GM12878 (cell line): ENCODE measurements at regions of chr9 and their contacts with region 1.

Region 1: DNA sequence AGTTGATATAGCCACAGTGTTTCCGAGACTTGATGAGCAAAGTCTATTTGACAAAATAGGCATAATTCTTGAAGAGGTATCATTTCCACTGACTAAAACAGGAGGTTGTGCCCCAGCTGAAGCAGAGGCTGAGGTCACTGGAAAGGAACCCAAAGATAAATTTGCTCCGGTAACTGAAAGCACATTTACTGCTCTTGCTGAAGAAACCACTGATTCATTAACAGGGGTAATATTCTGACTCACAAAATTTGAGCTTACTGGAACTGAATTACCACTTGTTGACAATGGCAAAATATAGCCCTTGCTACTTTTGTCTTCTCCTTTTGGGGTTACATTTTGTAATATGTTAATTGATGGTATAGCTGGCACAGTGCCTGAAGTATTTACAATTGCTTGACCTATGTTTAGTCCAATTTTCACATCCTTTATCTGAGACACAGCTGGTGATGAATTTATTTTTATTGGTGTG is 30.2 kb downstream of the MLANA start:
- DNase-seq: peak; percentile 66
- ATAC-seq: peak; percentile 91
- H3K4me3 ChIP-seq: no peak overlapping the region
- H3K27ac ChIP-seq: no peak overlapping the region
- H3K4me1 ChIP-seq: no peaks in the 10 kb centered on the region; the same call in 1 of the 2 replicates
- H3K27me3 ChIP-seq: no peaks in the 10 kb centered on the region
- CTCF ChIP-seq: no peak
- EP300 ChIP-seq: peak; percentile 87 to 94; a peak in 3 of 4 replicates
- POLR2A ChIP-seq: no peak
- RAD21 ChIP-seq: no peak

Region 2: GRCh38 chr9:5851445-5851844 is 69.4 kb before region 1 on chr9:
- CTCF ChIA-PET with region 1: interaction called, 11 read pairs
- POLR2A ChIA-PET with region 1: interaction called, 8 read pairs
- RAD21 ChIA-PET with region 1: interaction called, 33 read pairs
- SMC1A ChIA-PET with region 1: interaction called, 40 read pairs
- in situ Hi-C with region 1: no loop called
- intact Hi-C with region 1: no loop called
- DNase-seq: peak; percentile 90
- ATAC-seq: peak; percentile 96
- H3K4me3 ChIP-seq: no peak overlapping the region
- H3K27ac ChIP-seq: peak overlapping the region; percentile 54; the same call in 1 of the 2 replicates
- H3K4me1 ChIP-seq: peaks cover 37% of the 10 kb centered on the region
- H3K27me3 ChIP-seq: no peaks in the 10 kb centered on the region
- CTCF ChIP-seq: peak in 1 of 3 experiments; percentile 11; a peak in 1 of 6 replicates
- EP300 ChIP-seq: peak; percentile 34 to 82; a peak in 2 of 4 replicates
- POLR2A ChIP-seq: no peak
- RAD21 ChIP-seq: no peak

Region 3: DNA sequence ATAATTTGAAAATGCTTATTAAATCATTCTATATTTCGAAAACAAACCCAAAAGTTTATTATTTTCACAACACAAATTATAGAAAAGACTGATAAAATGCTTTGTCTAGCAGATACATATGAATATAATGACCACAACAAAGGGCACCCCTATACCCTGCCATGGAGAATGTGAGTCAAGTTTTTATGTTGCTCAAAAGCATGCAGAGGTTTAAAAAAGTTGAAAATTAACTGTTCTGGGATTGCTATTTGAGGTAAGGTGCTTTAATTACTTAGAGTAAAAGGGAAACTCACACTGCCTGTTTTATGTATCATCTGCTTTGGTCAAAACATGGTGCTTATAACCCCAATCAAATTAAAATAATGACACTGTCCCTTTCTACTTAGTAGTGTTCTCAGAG is 10.8 kb after region 1 on chr9:
- CTCF ChIA-PET with region 1: interaction called, 3 read pairs
- POLR2A ChIA-PET with region 1: interaction called, 4 read pairs
- RAD21 ChIA-PET with region 1: interaction called, 5 read pairs
- SMC1A ChIA-PET with region 1: interaction called, 13 read pairs
- in situ Hi-C with region 1: no loop called
- intact Hi-C with region 1: no loop called
- DNase-seq: no peak
- ATAC-seq: peak; percentile 57
- H3K4me3 ChIP-seq: no peak overlapping the region
- H3K27ac ChIP-seq: no peak overlapping the region
- H3K4me1 ChIP-seq: no peaks in the 10 kb centered on the region
- H3K27me3 ChIP-seq: no peaks in the 10 kb centered on the region
- CTCF ChIP-seq: no peak
- EP300 ChIP-seq: no peak
- POLR2A ChIP-seq: no peak
- RAD21 ChIP-seq: no peak

Region 4: DNA sequence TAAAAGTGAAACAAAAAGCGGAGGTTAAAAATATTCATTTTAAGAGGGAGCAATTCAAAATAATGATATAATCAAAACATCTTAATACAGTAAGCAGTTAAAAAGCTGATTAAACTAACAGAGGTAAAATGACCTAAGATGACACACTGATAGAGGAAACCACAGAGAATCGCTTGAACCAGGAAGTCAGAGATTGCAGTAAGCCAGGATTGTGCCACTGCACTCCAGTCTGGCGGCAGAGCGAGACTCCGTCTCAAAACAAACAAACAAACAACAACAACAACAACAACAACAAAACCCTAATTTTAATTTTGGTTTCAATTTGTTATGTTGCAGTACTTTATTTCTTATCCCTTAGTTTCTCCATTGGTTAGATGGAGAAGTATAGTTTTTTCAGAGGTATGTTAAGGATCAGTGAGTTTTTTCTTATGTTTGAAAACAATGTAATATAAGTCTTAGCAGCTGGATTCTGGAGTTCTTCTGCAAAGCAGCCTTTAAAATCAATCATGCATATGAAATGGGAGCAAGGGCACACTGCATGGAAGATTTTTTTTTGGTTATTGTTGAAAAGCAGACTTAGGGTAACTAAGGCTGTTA is 28.3 kb after region 1 on chr9:
- CTCF ChIA-PET with region 1: interaction called, 13 read pairs
- POLR2A ChIA-PET with region 1: interaction called, 12 read pairs
- RAD21 ChIA-PET with region 1: interaction called, 115 read pairs
- SMC1A ChIA-PET with region 1: interaction called, 109 read pairs
- in situ Hi-C with region 1: no loop called
- intact Hi-C with region 1: no loop called
- DNase-seq: peak; percentile 15
- ATAC-seq: peak; percentile 79
- H3K4me3 ChIP-seq: peak overlapping the region; percentile 26; the same call in 1 of the 2 replicates
- H3K27ac ChIP-seq: peak overlapping the region; percentile 43
- H3K4me1 ChIP-seq: 0 out of 2 replicates have a peak, but pooled peaks cover 3% of the 10 kb centered on the region
- H3K27me3 ChIP-seq: no peaks in the 10 kb centered on the region
- CTCF ChIP-seq: no peak
- EP300 ChIP-seq: no peak
- POLR2A ChIP-seq: no peak
- RAD21 ChIP-seq: no peak

Region 5: GRCh38 chr9:5976674-5977397 is 55.9 kb after region 1 on chr9:
- CTCF ChIA-PET with region 1: interaction called, 4 read pairs
- POLR2A ChIA-PET with region 1: interaction called, 3 read pairs
- RAD21 ChIA-PET with region 1: interaction called, 8 read pairs
- SMC1A ChIA-PET with region 1: interaction called, 12 read pairs
- in situ Hi-C with region 1: no loop called
- intact Hi-C with region 1: no loop called
- DNase-seq: peak; percentile 11
- ATAC-seq: peak; percentile 88
- H3K4me3 ChIP-seq: no peak overlapping the region
- H3K27ac ChIP-seq: peak overlapping the region; percentile 57
- H3K4me1 ChIP-seq: peaks cover 4% of the 10 kb centered on the region; the same call in 1 of the 2 replicates
- H3K27me3 ChIP-seq: no peaks in the 10 kb centered on the region
- CTCF ChIP-seq: peak; percentile 32 to 68 (median 36); a peak in 4 of 6 replicates
- EP300 ChIP-seq: no peak
- POLR2A ChIP-seq: no peak
- RAD21 ChIP-seq: peak; percentile 70